ENCODE measurements at regions of chr14 and their contacts with region 1.

Region 1: DNA sequence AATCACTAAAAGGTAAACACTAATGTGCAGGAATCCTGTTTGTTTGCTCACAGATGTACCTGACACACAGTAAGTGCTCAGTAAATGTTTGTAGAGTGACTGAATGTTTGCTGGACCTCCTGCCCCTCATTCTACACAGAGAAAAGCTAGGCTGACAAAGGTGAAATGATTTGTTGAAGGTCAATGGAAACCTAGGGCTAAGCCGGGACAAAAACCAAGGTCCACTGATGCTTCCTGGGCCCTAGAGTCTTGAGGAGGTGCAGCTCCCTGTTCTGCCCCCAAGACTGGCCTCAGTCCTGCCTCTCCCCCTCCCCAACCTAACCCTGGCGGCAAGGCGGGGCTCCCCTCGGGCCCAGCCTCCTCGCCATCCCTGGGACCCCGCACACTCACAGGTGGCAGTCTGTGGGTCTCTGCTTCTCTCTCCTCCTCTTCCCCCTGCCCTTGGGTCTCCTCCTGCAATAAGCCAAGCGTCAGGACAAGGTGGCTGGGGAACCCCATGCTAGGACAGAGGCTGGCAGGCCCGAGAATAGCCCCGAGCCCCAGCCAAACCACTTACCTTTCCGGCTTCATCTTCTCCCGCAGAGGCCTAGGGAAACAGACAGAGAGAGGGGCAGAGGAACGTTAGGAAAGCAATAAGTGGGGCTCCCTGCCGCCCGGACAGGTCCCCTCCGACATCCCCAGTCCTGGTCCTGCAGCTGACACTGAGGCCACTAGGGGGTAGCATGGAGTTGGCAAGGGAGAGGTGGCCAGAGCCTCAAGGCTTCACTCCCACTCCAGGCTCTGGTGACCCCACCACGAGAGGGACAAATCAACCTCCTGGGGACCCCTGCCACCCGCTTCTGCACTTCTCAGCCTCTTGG is 9.3 kb downstream of the PGF start:
- DNase-seq: peak; percentile 88
- H3K4me3 ChIP-seq: peak overlapping the region in 1 of 4 donors; percentile 12
- H3K27ac ChIP-seq: peak overlapping the region in 2 of 4 donors; percentile 10 to 12
- H3K4me1 ChIP-seq: peaks cover 0 to 27% (median 23%) of the 10 kb centered on the region in 4 donors
- H3K27me3 ChIP-seq: peaks cover 0 to 25% (median 6%) of the 10 kb centered on the region in 3 donors
- CTCF ChIP-seq: peak; percentile 82 to 95 (median 92)
- EP300 ChIP-seq: no peak
- POLR2A ChIP-seq: no peak

Region 2: GRCh38 chr14:75002392-75003249 is 56.6 kb after region 1 on chr14 and contains the start of gene EIF2B2:
- intact Hi-C with region 1: loop called (anchors 2 kb)
- DNase-seq: peak; percentile 98
- H3K4me3 ChIP-seq: peak within 1 kb of the TSS; percentile 86 to 96 (median 95)
- H3K27ac ChIP-seq: peak within 1 kb of the TSS; percentile 80 to 85 (median 84)
- H3K4me1 ChIP-seq: peaks cover 0 to 22% (median 19%) of the 10 kb centered on the region in 4 donors
- H3K27me3 ChIP-seq: no peaks in the 10 kb centered on the region
- CTCF ChIP-seq: peak in 1 of 4 experiments; percentile 34
- EP300 ChIP-seq: no peak
- POLR2A ChIP-seq: peak; percentile 50 to 52
- total RNA-seq, gene EIF2B2: 34.1 to 37.5 (median 35.3) TPM

Region 3: DNA sequence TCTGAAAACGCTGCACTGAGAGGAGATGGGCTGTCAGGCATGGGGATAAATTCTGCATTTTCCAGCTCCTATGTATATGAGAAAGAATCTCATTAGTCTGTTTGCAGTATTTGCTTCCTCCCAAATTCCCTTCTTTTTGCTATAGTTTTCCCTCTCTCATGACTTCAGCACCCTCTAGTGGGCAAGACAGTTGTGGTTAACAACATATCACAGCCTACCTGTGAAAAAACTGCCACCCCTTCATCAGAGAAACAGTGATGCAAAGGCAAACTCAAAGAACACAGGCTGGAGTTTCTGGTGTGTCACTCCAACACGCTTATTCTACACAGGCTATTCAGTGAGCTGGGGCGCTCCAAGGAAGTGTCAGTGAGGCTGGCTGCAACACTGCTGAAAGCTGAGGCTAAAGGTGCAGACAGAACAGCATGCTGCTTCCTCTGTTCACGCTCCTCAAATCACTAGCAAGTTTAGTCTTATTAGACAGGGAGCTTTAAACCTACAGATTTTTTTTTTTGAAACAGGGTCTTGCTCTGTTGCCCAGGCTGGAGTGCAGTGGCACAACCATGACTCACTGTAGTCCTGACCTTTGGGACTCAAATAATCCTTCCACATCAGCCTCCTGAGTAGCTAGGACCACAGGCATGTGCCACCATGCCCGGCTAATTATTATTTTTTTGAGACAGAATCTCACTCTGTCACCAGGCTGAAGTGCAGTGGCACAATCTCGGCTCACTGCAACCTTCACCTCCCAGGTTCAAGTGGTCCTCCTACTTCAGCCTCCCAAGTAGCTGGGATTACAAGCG is 142.7 kb after region 1 on chr14:
- intact Hi-C with region 1: loop called (anchors 2 kb)
- DNase-seq: no peak
- H3K4me3 ChIP-seq: no peak overlapping the region
- H3K27ac ChIP-seq: no peak overlapping the region
- H3K4me1 ChIP-seq: no peaks in the 10 kb centered on the region
- H3K27me3 ChIP-seq: no peaks in the 10 kb centered on the region
- CTCF ChIP-seq: peak; percentile 36 to 76 (median 72)
- EP300 ChIP-seq: no peak
- POLR2A ChIP-seq: no peak